Motor neuron (in vitro differentiated cells): ENCODE measurements at regions of chr2 and their contacts with region 1.

Region 1: DNA sequence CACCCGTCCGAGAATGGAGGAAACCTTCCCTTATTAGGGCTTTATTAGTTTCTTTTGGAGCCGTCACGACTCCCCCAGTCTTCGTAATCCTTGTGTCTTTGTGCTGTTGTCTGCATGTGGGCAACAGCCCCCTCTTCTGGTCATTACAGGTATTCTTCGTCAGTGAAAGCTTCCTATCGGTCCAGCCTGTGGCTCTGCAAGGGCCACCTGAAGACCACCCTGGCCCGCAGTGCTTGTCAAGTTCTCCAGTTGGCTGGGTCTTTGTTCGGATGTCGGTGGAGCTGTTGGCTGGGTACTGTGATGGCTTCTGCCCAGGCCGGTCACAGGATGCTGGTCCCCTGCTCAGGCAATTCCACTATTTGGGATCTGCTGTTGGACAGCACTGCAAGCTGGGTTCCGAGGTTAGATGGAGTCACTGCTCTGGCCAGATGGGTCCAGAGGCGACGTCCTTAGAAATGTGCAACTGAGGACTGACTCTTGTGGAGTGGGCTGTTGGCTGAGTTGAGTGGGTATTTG is 19.2 kb downstream of the E2F6 start:
- ATAC-seq: peak; percentile 68 to 94 (median 84)
- H3K4me3 ChIP-seq: no peak overlapping the region
- H3K27ac ChIP-seq: no peak overlapping the region
- H3K4me1 ChIP-seq: peaks cover 0 to 3% of the 10 kb centered on the region in 2 donors

Region 2: DNA sequence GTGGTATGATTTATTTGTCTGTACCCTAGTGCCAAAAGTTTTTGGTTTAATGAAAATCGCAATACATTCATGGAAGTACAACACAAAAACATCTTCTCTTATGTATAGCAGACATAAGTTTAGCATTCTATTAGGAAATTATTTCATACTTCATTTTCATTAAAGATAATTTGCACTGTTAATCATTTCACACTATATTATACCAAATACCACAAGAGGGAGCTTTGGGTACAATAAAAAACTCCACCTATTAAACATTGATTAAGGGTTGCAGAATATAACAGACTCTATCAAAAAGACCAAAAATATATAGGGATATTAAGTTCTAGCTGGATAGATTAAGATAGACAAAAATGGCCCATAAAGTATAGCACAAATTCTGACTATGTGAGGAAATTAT is 212.5 kb before region 1 on chr2:
- in situ Hi-C with region 1: loop called in 1 of 9 experiments (anchors 25 kb)
- ATAC-seq: peak in 1 of 8 experiments; percentile 46
- H3K4me3 ChIP-seq: no peak overlapping the region
- H3K27ac ChIP-seq: no peak overlapping the region
- H3K4me1 ChIP-seq: no peaks in the 10 kb centered on the region